Endothelial cell of umbilical vein (primary cell): ENCODE measurements at regions of chr17 and their contacts with region 1.

Region 1: GRCh38 chr17:73833775-73834488 is 189.7 kb upstream of the SDK2 start:
- DNase-seq: no peak
- H3K4me3 ChIP-seq: no peak overlapping the region
- H3K27ac ChIP-seq: no peak overlapping the region
- H3K4me1 ChIP-seq: no peaks in the 10 kb centered on the region
- H3K27me3 ChIP-seq: no peaks in the 10 kb centered on the region
- CTCF ChIP-seq: no peak
- POLR2A ChIP-seq: no peak

Region 2: DNA sequence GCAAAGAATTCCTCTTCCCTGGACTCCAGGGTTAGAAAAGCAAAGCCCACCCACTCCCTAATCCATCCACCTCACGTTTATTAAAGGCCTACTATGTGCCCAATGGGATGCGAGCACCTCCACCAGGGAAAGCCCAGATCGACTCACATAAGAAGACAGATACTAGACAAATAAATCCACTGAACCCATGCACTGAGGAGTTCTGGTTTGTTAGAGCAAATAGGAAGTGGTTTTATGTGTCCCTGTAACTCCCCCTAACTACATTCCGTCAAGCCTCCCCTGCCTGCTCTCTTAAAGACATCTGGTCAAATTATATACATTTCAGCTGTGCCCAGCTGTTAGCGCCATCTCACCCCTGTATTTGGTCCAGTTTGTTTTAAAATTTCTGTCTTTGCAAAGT is 151.0 kb after region 1 on chr17:
- CTCF ChIA-PET with region 1: no interaction called
- POLR2A ChIA-PET with region 1: no interaction called
- dilution Hi-C with region 1: no loop called
- intact Hi-C with region 1: loop called (anchors 5 kb)
- DNase-seq: no peak
- H3K4me3 ChIP-seq: no peak overlapping the region
- H3K27ac ChIP-seq: no peak overlapping the region
- H3K4me1 ChIP-seq: no peaks in the 10 kb centered on the region
- H3K27me3 ChIP-seq: no peaks in the 10 kb centered on the region
- CTCF ChIP-seq: no peak
- POLR2A ChIP-seq: no peak